ENCODE measurements at regions of chr1 and their contacts with region 1.

Region 1: GRCh38 chr1:212665241-212666115 is 34.2 kb downstream of the BATF3 start:
- DNase-seq: peak; percentile 56 to 87 (median 72)
- ATAC-seq: peak; percentile 96
- H3K4me3 ChIP-seq: peak overlapping the region; percentile 40
- H3K4me3 Mint-ChIP-seq: peak overlapping the region; percentile 81
- H3K27ac ChIP-seq: no peak overlapping the region
- H3K27ac Mint-ChIP-seq: no peak overlapping the region
- H3K4me1 ChIP-seq: peaks cover 9% of the 10 kb centered on the region
- H3K4me1 Mint-ChIP-seq: no peaks in the 10 kb centered on the region
- H3K27me3 ChIP-seq: no peaks in the 10 kb centered on the region
- H3K27me3 Mint-ChIP-seq: peaks cover 11% of the 10 kb centered on the region
- CTCF ChIP-seq: peak; percentile 90

Region 2: GRCh38 chr1:212635141-212635631 is 30.3 kb before region 1 on chr1:
- CTCF ChIA-PET with region 1: no interaction called
- POLR2A ChIA-PET with region 1: no interaction called
- intact Hi-C with region 1: no loop called
- DNase-seq: peak in 3 of 14 experiments; percentile 34 to 55 (median 49)
- ATAC-seq: no peak
- H3K4me3 ChIP-seq: no peak overlapping the region
- H3K4me3 Mint-ChIP-seq: no peak overlapping the region
- H3K27ac ChIP-seq: no peak overlapping the region
- H3K27ac Mint-ChIP-seq: peak overlapping the region; percentile 81
- H3K4me1 ChIP-seq: peaks cover 29% of the 10 kb centered on the region
- H3K4me1 Mint-ChIP-seq: peaks cover 23% of the 10 kb centered on the region
- H3K27me3 ChIP-seq: no peaks in the 10 kb centered on the region
- H3K27me3 Mint-ChIP-seq: no peaks in the 10 kb centered on the region
- CTCF ChIP-seq: no peak

Region 3: DNA sequence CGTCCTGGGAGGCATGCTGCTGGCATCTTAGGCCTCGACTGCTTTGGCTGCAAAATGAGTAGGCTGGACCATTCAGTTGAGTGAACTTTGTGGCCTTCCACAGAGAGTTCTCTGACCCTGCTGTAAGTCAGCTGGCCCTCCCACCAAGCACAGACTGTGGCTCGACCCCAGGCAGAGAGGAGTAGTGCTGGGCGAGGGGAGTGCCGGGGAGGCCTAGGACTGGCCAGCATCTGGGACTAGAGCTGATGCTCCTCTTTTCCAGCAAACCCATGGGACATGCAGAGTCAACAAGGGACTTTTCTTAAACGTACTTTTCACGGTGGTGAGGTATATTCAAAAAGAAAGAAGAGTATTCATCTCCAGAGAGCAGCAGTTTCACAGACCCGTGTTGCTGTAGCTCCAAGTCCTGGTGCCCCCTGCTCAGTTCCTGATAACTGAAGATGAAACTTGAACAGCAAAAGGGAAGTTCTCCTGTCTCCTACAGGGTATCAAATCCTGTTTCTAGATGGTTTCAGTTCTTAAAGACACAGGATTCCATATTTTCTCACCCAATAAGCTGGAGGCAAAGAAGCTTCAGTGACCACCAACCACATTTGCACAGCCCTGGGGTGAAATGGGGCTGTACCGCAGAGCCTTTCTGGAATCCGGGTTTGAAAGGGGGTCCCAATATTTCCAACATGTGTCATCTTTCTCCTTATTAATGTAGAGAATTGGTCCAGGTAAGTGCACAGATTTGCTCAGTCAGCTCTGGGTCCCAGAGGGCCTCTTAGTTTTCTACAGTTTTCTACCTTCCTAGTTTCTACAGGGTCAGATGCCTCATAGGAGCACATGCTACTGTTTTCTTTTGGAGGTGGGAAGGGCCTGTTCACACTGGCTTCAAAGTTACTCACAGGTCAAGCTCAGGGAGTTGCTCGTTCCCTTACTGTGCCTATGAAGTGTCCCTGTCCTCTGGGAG is 13.3 kb after region 1 on chr1:
- CTCF ChIA-PET with region 1: interaction called, 11 read pairs
- POLR2A ChIA-PET with region 1: no interaction called
- intact Hi-C with region 1: no loop called
- DNase-seq: peak in 1 of 14 experiments; percentile 27
- ATAC-seq: no peak
- H3K4me3 ChIP-seq: no peak overlapping the region
- H3K4me3 Mint-ChIP-seq: no peak overlapping the region
- H3K27ac ChIP-seq: no peak overlapping the region
- H3K27ac Mint-ChIP-seq: no peak overlapping the region
- H3K4me1 ChIP-seq: peaks cover 13% of the 10 kb centered on the region
- H3K4me1 Mint-ChIP-seq: peaks cover 8% of the 10 kb centered on the region
- H3K27me3 ChIP-seq: no peaks in the 10 kb centered on the region
- H3K27me3 Mint-ChIP-seq: no peaks in the 10 kb centered on the region
- CTCF ChIP-seq: no peak

Region 4: GRCh38 chr1:212749821-212750535 is 84.5 kb after region 1 on chr1:
- CTCF ChIA-PET with region 1: interaction called, 18 read pairs
- POLR2A ChIA-PET with region 1: no interaction called
- intact Hi-C with region 1: loop called in 1 of 2 experiments (anchors 5 kb)
- DNase-seq: peak in 4 of 14 experiments; percentile 13 to 67 (median 42)
- ATAC-seq: peak; percentile 27
- H3K4me3 ChIP-seq: no peak overlapping the region
- H3K4me3 Mint-ChIP-seq: peak overlapping the region; percentile 4
- H3K27ac ChIP-seq: peak overlapping the region in 1 of 2 donors; percentile 14
- H3K27ac Mint-ChIP-seq: peak overlapping the region; percentile 78
- H3K4me1 ChIP-seq: peaks cover 29% of the 10 kb centered on the region
- H3K4me1 Mint-ChIP-seq: peaks cover 54% of the 10 kb centered on the region
- H3K27me3 ChIP-seq: no peaks in the 10 kb centered on the region
- H3K27me3 Mint-ChIP-seq: no peaks in the 10 kb centered on the region
- CTCF ChIP-seq: peak; percentile 69

Region 5: DNA sequence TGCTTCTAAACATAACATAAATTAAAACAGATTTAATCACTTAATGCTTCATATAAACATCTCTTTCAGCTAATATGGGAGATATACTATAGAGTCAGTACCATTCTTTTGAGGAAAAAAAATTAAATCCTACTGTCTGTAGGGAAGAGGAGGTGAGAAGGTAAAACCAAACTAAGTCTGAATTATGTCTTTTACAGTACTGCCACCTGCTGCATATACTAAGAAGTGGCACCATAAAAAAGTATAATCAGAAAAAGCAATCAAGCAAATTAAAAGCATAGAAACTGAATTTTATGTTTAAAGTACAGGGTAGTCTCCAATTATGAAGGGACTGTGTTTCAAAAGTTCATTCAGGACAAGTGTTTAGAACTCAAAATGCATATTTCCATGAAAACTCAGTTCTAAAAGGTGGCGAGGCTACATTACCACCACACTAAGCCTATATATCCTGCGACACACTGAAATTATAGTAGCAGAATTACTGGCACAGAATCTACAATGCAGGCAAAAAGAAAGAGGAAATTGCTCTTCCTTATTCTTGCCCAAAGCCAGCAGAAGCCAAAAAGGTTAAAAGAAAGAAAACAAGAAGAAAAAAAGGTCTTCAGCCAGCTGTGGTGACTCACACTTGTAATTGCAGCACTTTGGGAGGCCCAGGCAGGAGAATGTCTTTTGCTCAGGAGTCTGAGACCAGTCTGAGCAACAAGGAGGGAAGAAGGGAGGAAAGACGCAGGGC is 117.1 kb after region 1 on chr1:
- CTCF ChIA-PET with region 1: interaction called, 23 read pairs
- POLR2A ChIA-PET with region 1: interaction called, 3 read pairs
- intact Hi-C with region 1: loop called (anchors 1 kb)
- DNase-seq: peak in 3 of 14 experiments; percentile 40 to 59 (median 47)
- ATAC-seq: peak; percentile 60
- H3K4me3 ChIP-seq: no peak overlapping the region
- H3K4me3 Mint-ChIP-seq: no peak overlapping the region
- H3K27ac ChIP-seq: no peak overlapping the region
- H3K27ac Mint-ChIP-seq: peak overlapping the region; percentile 11
- H3K4me1 ChIP-seq: no peaks in the 10 kb centered on the region
- H3K4me1 Mint-ChIP-seq: peaks cover 8% of the 10 kb centered on the region
- H3K27me3 ChIP-seq: no peaks in the 10 kb centered on the region
- H3K27me3 Mint-ChIP-seq: no peaks in the 10 kb centered on the region
- CTCF ChIP-seq: peak; percentile 72

Region 6: DNA sequence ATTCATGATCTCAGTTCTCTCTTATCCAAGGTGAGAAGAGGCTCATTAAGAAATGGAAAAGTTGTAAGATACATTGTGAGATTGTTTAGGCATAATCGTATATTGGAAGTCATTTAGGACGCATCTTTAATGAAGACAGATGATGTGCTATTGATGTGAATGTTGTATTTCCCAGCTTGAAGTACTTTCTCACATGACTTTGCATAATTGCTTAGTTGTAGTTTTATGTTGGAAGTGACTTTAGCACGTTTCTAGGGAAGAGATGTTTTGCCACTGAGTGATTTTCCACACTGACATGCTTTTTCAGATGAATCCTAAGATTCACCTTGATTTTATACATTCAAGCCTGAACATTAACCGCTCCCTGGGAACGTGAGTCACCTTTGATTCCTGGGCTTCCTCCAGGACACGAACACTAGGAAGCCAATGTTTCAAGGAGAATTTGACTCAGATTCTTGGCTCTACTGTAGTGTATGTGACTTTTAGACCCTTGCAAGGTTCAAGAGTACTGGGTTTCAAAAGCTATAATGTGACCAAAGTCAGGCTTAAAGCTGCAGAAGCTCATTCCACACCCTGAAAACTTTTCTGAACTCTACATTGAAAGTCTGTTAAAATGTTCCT is 322.3 kb after region 1 on chr1:
- CTCF ChIA-PET with region 1: interaction called, 6 read pairs
- POLR2A ChIA-PET with region 1: no interaction called
- intact Hi-C with region 1: loop called in 1 of 2 experiments (anchors 2 kb)
- DNase-seq: no peak
- ATAC-seq: no peak
- H3K4me3 ChIP-seq: no peak overlapping the region
- H3K4me3 Mint-ChIP-seq: no peak overlapping the region
- H3K27ac ChIP-seq: no peak overlapping the region
- H3K27ac Mint-ChIP-seq: no peak overlapping the region
- H3K4me1 ChIP-seq: no peaks in the 10 kb centered on the region
- H3K4me1 Mint-ChIP-seq: peaks cover 7% of the 10 kb centered on the region
- H3K27me3 ChIP-seq: no peaks in the 10 kb centered on the region
- H3K27me3 Mint-ChIP-seq: no peaks in the 10 kb centered on the region
- CTCF ChIP-seq: no peak